Heart left ventricle (tissue), 16 donors: ENCODE measurements at regions of chr10 and their contacts with region 1.

Region 1: GRCh38 chr10:125084191-125084613 is 76.2 kb downstream of the CTBP2 start:
- DNase-seq: peak in 3 of 5 donors; percentile 49 to 84 (median 56)
- ATAC-seq: peak; percentile 40 to 86 (median 76)
- H3K4me3 ChIP-seq: peak overlapping the region in 2 of 12 donors; percentile 6 to 34
- H3K27ac ChIP-seq: peak overlapping the region; percentile 62 to 92 (median 82)
- H3K4me1 ChIP-seq: peaks cover 3 to 73% (median 45%) of the 10 kb centered on the region in 12 donors
- H3K27me3 ChIP-seq: no peaks in the 10 kb centered on the region
- CTCF ChIP-seq: peak in 4 of 12 donors; percentile 13 to 26 (median 21)
- POLR2A ChIP-seq: no peak

Region 2: GRCh38 chr10:125038637-125039036 is 45.6 kb before region 1 on chr10:
- intact Hi-C with region 1: no loop called
- DNase-seq: peak in 3 of 5 donors; percentile 69 to 77 (median 76)
- ATAC-seq: peak; percentile 89 to 96 (median 92)
- H3K4me3 ChIP-seq: no peak overlapping the region
- H3K27ac ChIP-seq: peak overlapping the region in 6 of 12 donors; percentile 9 to 58 (median 33)
- H3K4me1 ChIP-seq: peaks cover 6 to 74% (median 45%) of the 10 kb centered on the region in 12 donors
- H3K27me3 ChIP-seq: no peaks in the 10 kb centered on the region
- CTCF ChIP-seq: peak in 9 of 12 donors; percentile 9 to 48 (median 30)
- POLR2A ChIP-seq: no peak

Region 3: GRCh38 chr10:125123476-125124114 is 39.4 kb after region 1 on chr10:
- intact Hi-C with region 1: loop called in 1 of 10 experiments (anchors 5 kb)
- DNase-seq: peak; percentile 84 to 95 (median 89)
- ATAC-seq: peak; percentile 76 to 93 (median 88)
- H3K4me3 ChIP-seq: peak overlapping the region in 9 of 12 donors; percentile 6 to 39 (median 26)
- H3K27ac ChIP-seq: peak overlapping the region; percentile 44 to 88 (median 82)
- H3K4me1 ChIP-seq: peaks cover 7 to 98% (median 74%) of the 10 kb centered on the region in 12 donors
- H3K27me3 ChIP-seq: no peaks in the 10 kb centered on the region
- CTCF ChIP-seq: peak in 1 of 12 donors; percentile 19
- POLR2A ChIP-seq: no peak

Region 4: GRCh38 chr10:125137601-125138438 is 53.6 kb after region 1 on chr10:
- intact Hi-C with region 1: loop called in 1 of 10 experiments (anchors 10 kb)
- DNase-seq: no peak
- ATAC-seq: peak; percentile 13 to 54 (median 46)
- H3K4me3 ChIP-seq: peak overlapping the region in 1 of 12 donors; percentile 6
- H3K27ac ChIP-seq: peak overlapping the region in 3 of 12 donors; percentile 17 to 52 (median 37)
- H3K4me1 ChIP-seq: peaks cover 0 to 90% (median 45%) of the 10 kb centered on the region in 12 donors
- H3K27me3 ChIP-seq: no peaks in the 10 kb centered on the region
- CTCF ChIP-seq: peak in 2 of 12 donors; percentile 8 to 20
- POLR2A ChIP-seq: no peak

Region 5: GRCh38 chr10:125144693-125145623 is 60.8 kb after region 1 on chr10:
- intact Hi-C with region 1: loop called in 3 of 10 experiments (anchors 5 kb)
- DNase-seq: peak in 2 of 5 donors; percentile 62 to 65
- ATAC-seq: peak; percentile 48 to 65 (median 58)
- H3K4me3 ChIP-seq: peak overlapping the region in 5 of 12 donors; percentile 11 to 30 (median 18)
- H3K27ac ChIP-seq: peak overlapping the region in 10 of 12 donors; percentile 8 to 68 (median 42)
- H3K4me1 ChIP-seq: peaks cover 21 to 91% (median 71%) of the 10 kb centered on the region in 12 donors
- H3K27me3 ChIP-seq: no peaks in the 10 kb centered on the region
- CTCF ChIP-seq: peak; percentile 17 to 61 (median 46)
- POLR2A ChIP-seq: no peak

Region 6: DNA sequence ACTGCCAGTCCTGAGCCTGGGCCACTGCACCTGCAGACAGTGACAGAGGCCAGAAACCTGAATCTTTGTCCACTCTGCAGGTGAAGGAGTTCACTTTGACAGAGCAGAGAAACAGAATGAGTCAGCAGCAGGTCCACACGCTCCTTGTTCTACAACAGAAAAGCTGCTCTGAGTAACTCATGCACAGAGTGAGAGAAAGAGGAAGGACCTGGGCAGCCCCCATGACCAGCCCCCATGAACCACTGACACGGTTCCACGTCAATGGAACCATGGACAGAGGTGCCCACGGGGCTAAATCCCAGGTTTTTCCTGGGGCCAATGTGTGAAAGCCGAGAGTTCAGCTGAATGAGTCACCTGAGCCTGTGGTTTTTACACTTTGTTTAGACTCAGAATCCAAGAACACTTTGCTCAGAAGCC is 116.9 kb after region 1 on chr10:
- intact Hi-C with region 1: no loop called
- DNase-seq: no peak
- ATAC-seq: no peak
- H3K4me3 ChIP-seq: no peak overlapping the region
- H3K27ac ChIP-seq: no peak overlapping the region
- H3K4me1 ChIP-seq: no peaks in the 10 kb centered on the region
- H3K27me3 ChIP-seq: peaks cover 0 to 4% (median 0%) of the 10 kb centered on the region in 9 donors
- CTCF ChIP-seq: no peak
- POLR2A ChIP-seq: no peak

Region 7: GRCh38 chr10:125257521-125258097 is 173.4 kb after region 1 on chr10:
- intact Hi-C with region 1: no loop called
- DNase-seq: no peak
- ATAC-seq: no peak
- H3K4me3 ChIP-seq: no peak overlapping the region
- H3K27ac ChIP-seq: no peak overlapping the region
- H3K4me1 ChIP-seq: no peaks in the 10 kb centered on the region
- H3K27me3 ChIP-seq: no peaks in the 10 kb centered on the region
- CTCF ChIP-seq: no peak
- POLR2A ChIP-seq: no peak